HEK293 (cell line): ENCODE measurements at regions of chr22 and their contacts with region 1.

Region 1: DNA sequence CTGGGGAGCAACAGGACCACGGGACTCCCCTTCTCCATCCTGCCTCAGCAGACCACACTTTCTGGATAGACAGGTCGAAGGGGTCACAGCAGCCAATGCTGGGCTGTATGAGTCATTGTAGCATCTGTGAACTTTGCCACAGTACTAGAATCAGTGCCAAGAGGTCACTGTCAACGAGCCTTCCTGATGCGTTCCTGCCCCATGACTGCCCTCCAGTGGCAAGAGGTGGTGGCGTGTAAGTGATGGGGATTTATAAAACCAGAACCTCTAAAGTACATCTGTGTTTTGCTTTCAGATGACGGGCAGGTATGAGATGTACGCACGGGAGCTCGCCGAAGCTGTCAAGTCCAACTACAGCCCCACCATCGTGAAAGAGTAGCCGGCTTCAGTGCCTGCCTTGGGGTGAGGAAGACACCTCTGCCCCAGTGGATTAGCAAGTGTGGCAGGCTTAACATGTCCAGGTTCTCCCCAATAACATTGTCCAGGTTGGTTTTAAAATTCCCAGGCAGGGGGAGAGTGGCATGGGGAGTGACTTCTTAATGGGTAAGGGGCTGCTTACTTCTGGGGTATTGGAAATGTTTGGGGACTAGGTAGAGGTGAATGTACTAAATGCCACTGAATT is 29.4 kb downstream of the GUCD1 start:
- H3K4me3 ChIP-seq: no peak overlapping the region
- H3K27ac ChIP-seq: no peak overlapping the region
- H3K4me1 ChIP-seq: peaks cover 2% of the 10 kb centered on the region; the same call in 1 of the 2 replicates
- CTCF ChIP-seq: peak; percentile 73

Region 2: DNA sequence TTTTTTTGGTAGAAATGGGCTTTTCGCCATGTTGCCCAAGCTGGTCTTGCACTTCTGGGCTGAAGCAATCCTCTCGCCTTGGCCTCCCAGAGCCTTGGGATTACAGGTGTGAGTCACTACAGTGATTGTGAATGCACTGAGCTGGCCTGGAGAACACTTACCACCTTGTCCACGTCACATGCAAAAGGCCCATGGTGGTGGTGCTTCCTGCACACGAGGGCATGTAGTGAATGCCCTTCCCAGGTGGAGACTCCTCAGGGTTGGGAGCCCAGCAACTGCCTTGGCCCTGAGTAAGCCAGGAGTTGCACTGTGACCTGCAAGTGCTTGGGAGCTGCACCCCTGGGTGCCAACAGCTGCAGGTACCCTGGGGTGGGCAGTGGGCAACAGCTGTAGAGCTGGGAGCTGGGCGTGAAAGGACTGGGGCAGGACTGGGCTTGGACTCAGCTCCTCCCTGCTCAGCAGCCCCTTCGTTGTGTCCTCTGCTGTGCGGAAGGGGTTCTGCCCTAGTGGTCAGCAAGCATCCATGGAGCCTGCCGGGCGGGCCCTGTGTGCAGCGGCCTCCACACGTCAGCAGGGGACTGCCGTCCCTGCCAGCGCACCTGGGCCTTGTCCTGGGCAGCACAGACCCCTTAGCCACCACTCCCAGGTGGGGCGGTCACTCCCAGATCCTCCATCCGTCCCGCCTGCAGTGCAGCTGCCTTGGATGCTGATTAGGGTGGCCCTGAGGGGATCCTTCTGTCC is 107.5 kb before region 1 on chr22:
- CTCF ChIA-PET with region 1: interaction called, 46 read pairs
- POLR2A ChIA-PET with region 1: interaction called, 4 read pairs
- H3K4me3 ChIP-seq: no peak overlapping the region
- H3K27ac ChIP-seq: no peak overlapping the region
- H3K4me1 ChIP-seq: no peaks in the 10 kb centered on the region
- CTCF ChIP-seq: no peak

Region 3: DNA sequence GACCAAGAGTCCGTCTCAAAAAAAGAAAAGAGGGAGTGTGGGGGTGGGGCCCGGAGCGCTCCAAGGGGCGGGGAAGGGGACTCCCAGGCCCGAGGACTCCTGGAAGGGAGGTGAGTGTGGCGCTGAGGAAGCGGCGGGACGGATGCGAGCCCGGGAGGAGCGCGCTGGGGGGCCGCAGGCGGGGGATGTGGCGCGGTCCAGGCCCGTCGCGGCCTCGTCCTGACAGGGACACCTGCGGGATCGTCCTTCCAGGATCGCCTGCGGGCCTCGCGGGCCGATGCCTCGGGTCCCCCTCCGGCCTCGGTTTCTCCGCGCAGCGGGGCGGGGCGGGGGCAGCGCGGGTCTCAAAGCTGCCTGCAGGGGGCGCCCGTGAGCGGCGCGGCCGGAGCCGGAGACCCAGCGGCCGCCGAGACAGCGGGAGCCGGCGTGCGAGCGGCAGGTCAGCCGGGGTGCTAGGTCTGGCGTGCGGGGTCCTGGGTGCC is 102.0 kb before region 1 on chr22:
- CTCF ChIA-PET with region 1: interaction called, 46 read pairs
- POLR2A ChIA-PET with region 1: interaction called, 4 read pairs
- H3K4me3 ChIP-seq: peak overlapping the region; percentile 57
- H3K27ac ChIP-seq: no peak overlapping the region
- H3K4me1 ChIP-seq: no peaks in the 10 kb centered on the region
- CTCF ChIP-seq: no peak

Region 4: GRCh38 chr22:24503137-24503842 is 22.2 kb before region 1 on chr22:
- CTCF ChIA-PET with region 1: interaction called, 17 read pairs
- POLR2A ChIA-PET with region 1: no interaction called
- H3K4me3 ChIP-seq: no peak overlapping the region
- H3K27ac ChIP-seq: no peak overlapping the region
- H3K4me1 ChIP-seq: peaks cover 12% of the 10 kb centered on the region
- CTCF ChIP-seq: 0 out of 2 replicates have a peak, but pooled peaks have one; percentile 23

Region 5: GRCh38 chr22:24536089-24536488 is 10.6 kb after region 1 on chr22:
- CTCF ChIA-PET with region 1: interaction called, 13 read pairs
- POLR2A ChIA-PET with region 1: no interaction called
- H3K4me3 ChIP-seq: no peak overlapping the region
- H3K27ac ChIP-seq: no peak overlapping the region
- H3K4me1 ChIP-seq: no peaks in the 10 kb centered on the region
- CTCF ChIP-seq: no peak